ENCODE measurements at regions of chr6 and their contacts with region 1.

Region 1: DNA sequence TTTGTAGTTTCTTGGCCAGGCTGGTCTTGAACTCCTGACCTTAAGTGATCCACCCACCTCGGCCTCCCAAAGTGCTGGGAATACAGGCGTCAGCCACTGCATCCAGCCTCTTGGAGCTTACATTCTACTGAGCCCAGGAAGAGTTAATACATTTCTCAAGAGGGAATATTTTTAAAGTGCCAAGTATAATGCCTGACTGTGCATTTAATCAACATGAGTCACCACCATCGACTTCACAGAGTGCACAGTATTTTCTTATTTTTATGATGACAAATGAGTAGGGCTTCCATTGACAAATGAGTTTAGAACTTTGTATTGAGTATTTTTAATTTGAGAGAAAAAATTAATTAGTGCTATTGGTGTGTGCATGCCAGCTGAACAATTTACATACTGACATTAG is 72.2 kb downstream of the SASH1 start:
- DNase-seq: peak; percentile 44
- H3K4me3 ChIP-seq: no peak overlapping the region
- CTCF ChIP-seq: no peak

Region 2: DNA sequence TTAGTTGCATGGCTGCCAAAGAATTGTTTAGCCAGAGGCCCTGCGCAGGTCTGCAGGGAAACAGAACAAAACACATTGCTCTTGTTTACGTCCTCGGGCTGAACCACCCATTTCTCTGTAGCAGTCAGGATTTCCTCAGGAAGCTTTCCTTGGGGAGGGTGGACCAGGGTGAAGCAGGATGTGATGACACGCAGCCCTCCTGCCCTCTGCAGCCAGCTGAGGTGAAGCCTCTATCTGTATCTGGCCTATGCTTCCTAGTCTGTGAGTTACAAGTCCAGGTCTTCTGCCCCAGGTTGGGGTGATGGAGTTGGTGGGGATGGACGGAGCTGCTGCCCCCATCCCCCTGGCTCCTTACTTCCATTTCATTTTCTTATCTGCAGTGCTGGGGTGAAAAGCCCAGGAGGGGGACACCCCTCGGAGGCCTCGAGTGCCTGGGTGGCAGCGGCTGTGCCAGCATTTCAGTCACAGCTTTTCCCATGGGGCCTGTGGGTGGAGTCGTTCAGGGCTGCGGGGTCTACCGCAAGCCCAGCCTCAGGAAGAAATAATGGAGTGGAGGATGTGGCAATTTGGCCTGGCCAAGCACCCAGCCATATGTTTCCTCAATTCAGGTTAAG is 47.3 kb before region 1 on chr6:
- in situ Hi-C with region 1: loop called (anchors 5 kb)
- DNase-seq: peak; percentile 6
- H3K4me3 ChIP-seq: no peak overlapping the region
- CTCF ChIP-seq: no peak

Region 3: GRCh38 chr6:148509800-148510581 is 95.2 kb after region 1 on chr6:
- in situ Hi-C with region 1: loop called (anchors 5 kb)
- DNase-seq: peak; percentile 94
- H3K4me3 ChIP-seq: peak overlapping the region; percentile 51
- CTCF ChIP-seq: no peak

Measured in astrocyte of the cerebellum (primary cell).